CD4-positive, alpha-beta memory T cell (primary cell): ENCODE measurements at regions of chr4 and their contacts with region 1.

Region 1: DNA sequence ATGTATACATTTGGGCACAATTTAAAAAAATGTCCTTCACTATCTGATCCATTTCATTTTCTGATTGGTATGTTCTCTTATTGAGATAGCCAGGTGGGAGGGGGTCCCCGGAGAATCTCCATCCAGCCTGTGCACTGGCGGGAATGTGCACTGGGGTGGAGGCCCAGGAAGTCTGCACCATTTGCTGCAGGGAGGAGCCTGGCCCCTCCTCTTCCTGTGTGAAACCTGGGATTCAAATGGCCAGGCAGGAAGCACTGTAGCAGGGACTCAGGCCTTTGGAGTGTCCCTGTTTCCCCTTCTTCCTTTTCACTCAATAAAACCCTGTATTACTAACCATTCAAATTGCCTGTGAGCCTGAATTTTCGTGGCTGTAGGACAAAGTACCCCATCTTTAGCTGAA is 44.3 kb downstream of the GPRIN3 start:
- DNase-seq: no peak
- H3K4me3 ChIP-seq: no peak overlapping the region
- H3K4me3 Mint-ChIP-seq: peak overlapping the region in 3 of 8 donors; percentile 14 to 22 (median 19)
- H3K27ac ChIP-seq: no peak overlapping the region
- H3K27ac Mint-ChIP-seq: peak overlapping the region in 5 of 7 donors; percentile 57 to 89 (median 81)
- H3K4me1 ChIP-seq: peaks cover 93% of the 10 kb centered on the region
- H3K4me1 Mint-ChIP-seq: peaks cover 70 to 89% (median 77%) of the 10 kb centered on the region in 4 donors
- H3K27me3 ChIP-seq: no peaks in the 10 kb centered on the region
- H3K27me3 Mint-ChIP-seq: no peaks in the 10 kb centered on the region

Region 2: GRCh38 chr4:89283226-89284009 is 20.2 kb after region 1 on chr4:
- CTCF ChIA-PET with region 1: interaction called, 171 read pairs
- POLR2A ChIA-PET with region 1: interaction called, 118 read pairs
- intact Hi-C with region 1: no loop called
- DNase-seq: peak; percentile 83 to 89 (median 88)
- H3K4me3 ChIP-seq: peak overlapping the region; percentile 9 to 26
- H3K4me3 Mint-ChIP-seq: peak overlapping the region; percentile 83 to 91 (median 86)
- H3K27ac ChIP-seq: peak overlapping the region; percentile 86
- H3K27ac Mint-ChIP-seq: peak overlapping the region in 3 of 7 donors; percentile 99 to 100 (median 99)
- H3K4me1 ChIP-seq: peaks cover 97% of the 10 kb centered on the region
- H3K4me1 Mint-ChIP-seq: peaks cover 32 to 68% (median 47%) of the 10 kb centered on the region in 4 donors
- H3K27me3 ChIP-seq: no peaks in the 10 kb centered on the region
- H3K27me3 Mint-ChIP-seq: no peaks in the 10 kb centered on the region

Region 3: GRCh38 chr4:89640620-89641366 is 377.5 kb after region 1 on chr4:
- CTCF ChIA-PET with region 1: no interaction called
- POLR2A ChIA-PET with region 1: no interaction called
- intact Hi-C with region 1: no loop called
- DNase-seq: no peak
- H3K4me3 ChIP-seq: no peak overlapping the region
- H3K4me3 Mint-ChIP-seq: no peak overlapping the region
- H3K27ac ChIP-seq: no peak overlapping the region
- H3K27ac Mint-ChIP-seq: no peak overlapping the region
- H3K4me1 ChIP-seq: no peaks in the 10 kb centered on the region
- H3K4me1 Mint-ChIP-seq: no peaks in the 10 kb centered on the region
- H3K27me3 ChIP-seq: no peaks in the 10 kb centered on the region
- H3K27me3 Mint-ChIP-seq: peaks cover 4 to 6% of the 10 kb centered on the region in 2 donors